Activated naive CD4-positive, alpha-beta T cell treated with anti-CD3 and anti-CD28 coated beads for 36 hours (primary cell): ENCODE measurements at regions of chr7 and their contacts with region 1.

Region 1: GRCh38 chr7:142811154-142811737 is 40.5 kb downstream of the PRSS2 start:
- DNase-seq: peak; percentile 61
- H3K4me3 Mint-ChIP-seq: peak overlapping the region; percentile 42
- H3K27ac Mint-ChIP-seq: peak overlapping the region; percentile 99
- H3K4me1 Mint-ChIP-seq: peaks cover 83% of the 10 kb centered on the region
- H3K27me3 Mint-ChIP-seq: no peaks in the 10 kb centered on the region

Region 2: DNA sequence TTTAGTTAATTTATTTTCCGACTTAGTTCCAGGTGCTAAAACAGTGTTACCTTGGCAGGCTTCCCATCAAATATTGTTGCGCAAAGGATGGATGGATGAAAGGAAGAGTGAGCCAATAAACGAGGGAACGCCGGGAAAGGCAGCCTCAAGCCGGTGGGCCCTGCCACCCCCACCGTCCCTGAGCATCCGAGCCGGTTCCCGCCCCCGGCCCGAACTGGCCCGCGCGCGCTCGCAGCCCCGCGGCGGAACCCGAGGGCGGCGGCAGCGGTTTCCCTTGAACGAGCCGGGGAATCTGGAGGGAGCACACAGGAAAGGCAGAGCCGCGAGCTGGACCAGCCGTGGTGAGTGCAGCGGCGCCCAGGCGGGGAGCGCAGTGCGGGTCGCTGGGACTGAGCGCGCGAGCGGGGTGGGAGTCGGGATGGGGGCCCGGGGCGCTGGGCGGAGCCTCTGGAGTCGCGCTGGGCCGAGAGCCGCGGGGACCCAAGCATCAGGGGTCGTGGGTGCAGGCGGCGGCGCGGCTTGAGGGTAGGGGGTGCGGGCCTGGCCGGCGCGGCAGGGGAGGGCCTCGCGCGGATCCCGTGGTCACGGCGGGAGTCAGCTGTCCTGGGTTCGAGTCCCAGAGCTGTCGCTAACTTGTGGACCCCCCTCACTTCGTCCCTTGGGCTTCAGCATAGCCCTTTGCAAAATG is 1260.0 kb before region 1 on chr7 and contains the start of gene AGK:
- CTCF ChIA-PET with region 1: no interaction called
- intact Hi-C with region 1: loop called (anchors 10 kb)
- DNase-seq: peak; percentile 83
- H3K4me3 Mint-ChIP-seq: peak within 1 kb of the TSS; percentile 86
- H3K27ac Mint-ChIP-seq: peak within 1 kb of the TSS; percentile 85
- H3K4me1 Mint-ChIP-seq: peaks cover 36% of the 10 kb centered on the region
- H3K27me3 Mint-ChIP-seq: no peaks in the 10 kb centered on the region
- total RNA-seq, gene AGK: 35.8 to 37.9 TPM

Region 3: GRCh38 chr7:142323706-142324105 is 487.5 kb before region 1 on chr7:
- CTCF ChIA-PET with region 1: interaction called, 6 read pairs
- intact Hi-C with region 1: loop called (anchors 1 kb)
- DNase-seq: peak; percentile 81
- H3K4me3 Mint-ChIP-seq: peak overlapping the region; percentile 41
- H3K27ac Mint-ChIP-seq: peak overlapping the region; percentile 73
- H3K4me1 Mint-ChIP-seq: peaks cover 29% of the 10 kb centered on the region
- H3K27me3 Mint-ChIP-seq: no peaks in the 10 kb centered on the region

Region 4: GRCh38 chr7:142535123-142535779 is 276.0 kb before region 1 on chr7:
- CTCF ChIA-PET with region 1: interaction called, 21 read pairs
- intact Hi-C with region 1: loop called (anchors 1 kb)
- DNase-seq: peak; percentile 91
- H3K4me3 Mint-ChIP-seq: peak overlapping the region; percentile 64
- H3K27ac Mint-ChIP-seq: peak overlapping the region; percentile 86
- H3K4me1 Mint-ChIP-seq: peaks cover 29% of the 10 kb centered on the region
- H3K27me3 Mint-ChIP-seq: no peaks in the 10 kb centered on the region

Region 5: GRCh38 chr7:142669074-142669654 is 142.1 kb before region 1 on chr7:
- CTCF ChIA-PET with region 1: interaction called, 11 read pairs
- intact Hi-C with region 1: loop called (anchors 1 kb)
- DNase-seq: no peak
- H3K4me3 Mint-ChIP-seq: no peak overlapping the region
- H3K27ac Mint-ChIP-seq: peak overlapping the region; percentile 13
- H3K4me1 Mint-ChIP-seq: peaks cover 28% of the 10 kb centered on the region
- H3K27me3 Mint-ChIP-seq: no peaks in the 10 kb centered on the region

Region 6: GRCh38 chr7:142853739-142854371 is 42.6 kb after region 1 on chr7:
- CTCF ChIA-PET with region 1: interaction called, 23 read pairs
- intact Hi-C with region 1: loop called (anchors 1 kb)
- DNase-seq: peak; percentile 74
- H3K4me3 Mint-ChIP-seq: peak overlapping the region; percentile 91
- H3K27ac Mint-ChIP-seq: peak overlapping the region; percentile 79
- H3K4me1 Mint-ChIP-seq: peaks cover 31% of the 10 kb centered on the region
- H3K27me3 Mint-ChIP-seq: no peaks in the 10 kb centered on the region

Region 7: GRCh38 chr7:143287935-143288826 is 476.9 kb after region 1 on chr7 and contains the start of gene CASP2:
- CTCF ChIA-PET with region 1: no interaction called
- intact Hi-C with region 1: loop called (anchors 1 kb)
- DNase-seq: peak; percentile 99
- H3K4me3 Mint-ChIP-seq: peak within 1 kb of the TSS; percentile 96
- H3K27ac Mint-ChIP-seq: peak within 1 kb of the TSS; percentile 88
- H3K4me1 Mint-ChIP-seq: peaks cover 48% of the 10 kb centered on the region
- H3K27me3 Mint-ChIP-seq: no peaks in the 10 kb centered on the region
- total RNA-seq, gene CASP2: 116 to 124 TPM